ENCODE measurements at regions of chr1 and their contacts with region 1.

Region 1: GRCh38 chr1:34859446-34860200 is at the start of gene SMIM12:
- DNase-seq: peak; percentile 90
- H3K4me3 Mint-ChIP-seq: peak within 1 kb of the TSS; percentile 98
- H3K27ac Mint-ChIP-seq: peak within 1 kb of the TSS; percentile 96
- H3K4me1 Mint-ChIP-seq: peaks cover 51% of the 10 kb centered on the region
- H3K27me3 Mint-ChIP-seq: peaks cover 4% of the 10 kb centered on the region
- total RNA-seq, gene SMIM12: 62.4 and 66.2 TPM in 2 replicates

Region 2: GRCh38 chr1:34885405-34886247 is 26.0 kb after region 1 on chr1:
- intact Hi-C with region 1: loop called (anchors 2 kb)
- DNase-seq: peak; percentile 41
- H3K4me3 Mint-ChIP-seq: peak overlapping the region; percentile 71
- H3K27ac Mint-ChIP-seq: no peak overlapping the region
- H3K4me1 Mint-ChIP-seq: no peaks in the 10 kb centered on the region
- H3K27me3 Mint-ChIP-seq: peaks cover 40% of the 10 kb centered on the region

Region 3: DNA sequence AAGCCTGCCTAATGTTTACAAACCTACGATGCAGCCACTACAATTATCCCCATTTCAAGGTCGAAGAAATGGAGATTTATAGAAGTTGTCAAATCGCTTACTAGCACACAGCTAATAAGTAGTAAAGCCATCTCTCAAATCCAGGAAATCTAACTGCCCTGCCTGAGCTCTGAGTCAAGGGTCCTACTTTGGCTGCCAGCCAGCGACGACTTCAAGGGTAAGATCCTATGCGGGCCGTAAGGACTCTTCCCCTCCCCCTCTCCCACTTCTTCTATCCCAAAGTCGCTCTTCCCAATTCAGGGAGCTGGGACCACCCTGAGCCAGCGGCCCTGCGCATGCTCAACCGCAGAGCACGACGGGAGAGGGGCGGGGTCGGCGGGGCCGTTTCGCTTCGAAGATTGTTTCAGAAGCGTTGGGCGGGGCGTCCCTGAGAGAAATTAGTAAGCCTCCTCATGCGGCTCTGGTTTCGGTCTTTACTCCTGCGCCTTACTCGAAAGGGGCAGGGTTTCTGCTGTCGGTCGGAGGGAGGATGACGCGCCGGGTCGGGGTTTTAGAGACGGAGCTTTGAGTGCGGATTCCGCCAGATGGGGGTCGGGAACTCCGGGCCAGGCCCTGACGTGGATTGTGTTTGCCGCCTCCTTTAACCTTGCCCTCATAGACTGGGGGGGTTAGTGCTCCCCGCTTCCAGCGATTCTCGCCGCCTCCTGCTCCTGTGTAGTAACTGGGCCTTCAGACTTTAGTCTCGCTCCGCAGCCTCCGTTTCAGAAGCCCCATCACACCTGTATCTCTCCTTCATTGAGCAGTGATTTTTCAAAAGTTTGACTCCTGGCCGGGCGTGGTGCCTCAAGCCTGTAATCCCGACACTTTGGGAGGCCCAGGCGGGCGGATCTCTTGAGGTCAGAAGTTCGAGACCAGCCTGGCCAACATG is 219.6 kb after region 1 on chr1 and contains the start of gene ZMYM1:
- intact Hi-C with region 1: loop called (anchors 1 kb)
- DNase-seq: peak; percentile 82
- H3K4me3 Mint-ChIP-seq: peak within 1 kb of the TSS; percentile 98
- H3K27ac Mint-ChIP-seq: peak within 1 kb of the TSS; percentile 100
- H3K4me1 Mint-ChIP-seq: peaks cover 34% of the 10 kb centered on the region
- H3K27me3 Mint-ChIP-seq: no peaks in the 10 kb centered on the region
- total RNA-seq, gene ZMYM1: 3.3 and 5.3 TPM in 2 replicates

Region 4: DNA sequence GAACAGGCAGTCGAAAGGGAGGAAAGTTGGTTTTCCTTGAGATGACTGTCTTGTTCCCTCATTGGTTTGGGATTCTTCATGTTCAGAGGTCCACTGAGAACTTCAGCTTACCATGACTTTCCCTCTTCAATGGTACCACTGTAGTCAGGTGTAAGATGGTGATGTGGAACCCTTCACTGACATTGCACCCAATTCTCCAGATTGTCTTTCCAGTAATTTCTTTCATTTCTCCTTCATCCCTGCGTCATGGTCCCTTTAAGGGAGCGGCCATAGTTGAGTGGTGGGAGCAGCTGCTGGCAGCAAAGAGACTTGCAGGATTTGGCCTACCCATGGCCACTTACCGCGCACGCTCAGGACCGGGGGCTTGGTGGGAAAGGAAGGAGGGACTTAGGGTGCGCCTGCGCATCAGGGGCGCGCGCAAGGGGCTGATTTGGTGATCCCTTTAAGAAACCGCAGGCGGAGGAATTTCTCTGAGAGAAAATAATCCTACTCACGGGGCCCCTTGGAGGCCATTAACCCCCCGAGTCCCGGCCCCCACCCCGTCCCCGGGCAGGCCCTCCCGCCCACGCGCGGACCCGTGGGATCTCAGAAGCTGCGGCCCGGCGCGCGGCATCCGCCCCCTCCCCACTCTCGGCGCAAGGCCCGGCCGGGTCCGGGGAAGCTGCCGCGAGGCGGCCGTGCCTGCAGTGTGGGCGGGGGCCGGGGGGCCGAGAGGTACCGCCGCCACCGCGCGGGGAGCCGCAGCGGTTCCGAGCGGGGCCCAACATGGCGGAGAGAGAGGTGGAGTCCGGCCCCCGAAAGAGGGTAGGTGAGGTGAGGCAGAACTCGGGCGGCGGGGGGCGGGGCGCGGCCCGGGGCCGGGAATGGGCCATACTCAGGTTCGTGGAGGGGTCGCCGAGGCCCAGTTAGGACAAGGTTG is 408.9 kb after region 1 on chr1 and contains the start of gene ZMYM4:
- intact Hi-C with region 1: loop called (anchors 2 kb)
- DNase-seq: peak; percentile 88
- H3K4me3 Mint-ChIP-seq: peak within 1 kb of the TSS; percentile 87
- H3K27ac Mint-ChIP-seq: peak within 1 kb of the TSS; percentile 93
- H3K4me1 Mint-ChIP-seq: peaks cover 38% of the 10 kb centered on the region
- H3K27me3 Mint-ChIP-seq: no peaks in the 10 kb centered on the region
- total RNA-seq, gene ZMYM4: 25.1 and 33.0 TPM in 2 replicates